Thyroid gland (tissue), 4 donors: ENCODE measurements at regions of chr1 and their contacts with region 1.

Region 1: DNA sequence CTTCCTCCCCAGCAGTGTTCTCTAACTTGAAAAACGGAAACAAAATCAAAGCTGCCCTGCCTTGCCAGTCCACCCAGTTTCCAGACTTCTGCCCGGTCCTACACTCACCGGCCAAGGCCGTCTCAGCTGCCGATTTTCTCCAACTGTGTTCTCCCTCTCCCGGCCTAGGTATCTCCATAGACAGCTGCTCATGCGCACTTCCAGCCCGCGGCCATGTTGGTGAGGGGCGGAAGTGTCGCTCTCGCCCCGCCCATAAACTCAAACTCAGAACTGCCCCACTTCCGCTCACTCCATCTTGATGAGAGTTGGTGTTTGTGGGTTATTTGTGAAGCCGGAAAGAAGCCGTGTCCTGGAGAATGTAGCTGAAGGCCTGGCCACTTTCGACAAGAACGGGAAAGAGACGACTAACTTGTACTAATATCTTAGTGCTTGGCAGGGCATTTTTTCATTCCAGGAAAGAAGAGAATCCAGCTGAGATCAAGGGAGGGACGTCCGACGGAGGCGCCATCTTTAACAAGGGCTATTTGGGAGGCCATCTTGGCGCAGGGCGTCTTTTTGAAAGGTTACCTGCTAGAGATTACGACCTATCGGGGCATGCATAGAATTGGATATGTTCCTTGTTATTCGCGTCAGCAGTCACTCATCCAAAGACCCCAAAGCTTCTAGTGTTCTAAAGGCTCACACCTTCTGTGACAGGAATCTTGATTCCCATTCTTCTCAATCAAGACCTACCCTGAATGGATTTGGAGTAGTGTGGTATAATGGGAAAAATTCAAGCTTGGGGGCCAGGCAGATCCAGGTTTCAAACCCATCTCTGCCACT is at the start of gene USF1:
- DNase-seq: peak; percentile 94
- H3K4me3 ChIP-seq: peak within 1 kb of the TSS; percentile 29 to 91 (median 89)
- H3K27ac ChIP-seq: peak within 1 kb of the TSS; percentile 71 to 97 (median 97)
- H3K4me1 ChIP-seq: peaks cover 9 to 17% of the 10 kb centered on the region in 2 donors
- H3K27me3 ChIP-seq: no peaks in the 10 kb centered on the region
- CTCF ChIP-seq: no peak
- POLR2A ChIP-seq: peak in 1 of 2 donors; percentile 92
- total RNA-seq, gene USF1: 56.0 to 71.0 (median 70.3) TPM

Region 2: GRCh38 chr1:160997323-160998038 is 48.5 kb before region 1 on chr1:
- intact Hi-C with region 1: loop called (anchors 5 kb)
- DNase-seq: peak; percentile 64 to 66
- H3K4me3 ChIP-seq: no peak overlapping the region
- H3K27ac ChIP-seq: peak overlapping the region in 2 of 3 donors; percentile 36 to 38
- H3K4me1 ChIP-seq: peaks cover 16 to 26% of the 10 kb centered on the region in 2 donors
- H3K27me3 ChIP-seq: no peaks in the 10 kb centered on the region
- CTCF ChIP-seq: peak in 5 of 6 experiments; percentile 23 to 65 (median 46)
- POLR2A ChIP-seq: no peak